ENCODE measurements at regions of chr19 and their contacts with region 1.

Region 1: DNA sequence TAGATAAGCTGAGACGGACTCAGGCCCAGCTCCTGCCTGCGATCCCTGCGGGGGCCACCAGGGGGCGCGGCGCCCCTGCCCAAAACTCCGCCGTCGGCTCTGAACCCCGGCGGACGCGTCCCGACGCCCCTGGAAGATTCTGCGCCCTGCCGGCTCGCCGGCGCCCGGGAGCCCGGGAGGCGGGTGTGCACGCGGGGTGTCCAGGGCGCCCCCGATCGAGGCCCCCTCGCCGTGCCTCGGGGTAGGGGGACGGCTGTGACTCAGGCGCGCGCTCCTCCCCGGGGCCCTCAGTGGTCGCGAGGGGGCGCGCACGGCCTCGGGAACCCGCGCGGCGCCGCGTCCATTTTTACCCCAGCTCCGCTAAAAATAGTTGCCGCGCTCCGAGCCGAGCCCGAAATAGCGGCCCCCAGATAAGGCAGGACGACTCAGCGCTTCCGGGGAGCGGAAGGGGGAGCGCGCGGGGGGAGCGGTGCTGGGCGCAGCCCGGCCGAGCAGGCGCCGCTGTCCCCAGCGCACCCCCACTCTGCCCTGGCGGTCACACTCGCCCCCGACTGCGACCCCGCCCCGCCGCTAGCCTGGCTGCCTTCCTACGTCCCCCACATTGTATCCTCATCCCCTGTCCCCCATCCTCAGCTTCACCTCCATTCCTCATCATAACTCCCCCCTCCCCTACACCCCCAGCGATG is 16.0 kb upstream of the ERCC1 start:
- DNase-seq: peak; percentile 66
- ATAC-seq: peak; percentile 25
- H3K4me3 ChIP-seq: peak overlapping the region; percentile 76
- H3K27ac ChIP-seq: peak overlapping the region; percentile 20; the same call in 1 of the 2 replicates
- H3K4me1 ChIP-seq: peaks cover 14% of the 10 kb centered on the region
- H3K27me3 ChIP-seq: no peaks in the 10 kb centered on the region
- CTCF ChIP-seq: peak; percentile 86

Region 2: DNA sequence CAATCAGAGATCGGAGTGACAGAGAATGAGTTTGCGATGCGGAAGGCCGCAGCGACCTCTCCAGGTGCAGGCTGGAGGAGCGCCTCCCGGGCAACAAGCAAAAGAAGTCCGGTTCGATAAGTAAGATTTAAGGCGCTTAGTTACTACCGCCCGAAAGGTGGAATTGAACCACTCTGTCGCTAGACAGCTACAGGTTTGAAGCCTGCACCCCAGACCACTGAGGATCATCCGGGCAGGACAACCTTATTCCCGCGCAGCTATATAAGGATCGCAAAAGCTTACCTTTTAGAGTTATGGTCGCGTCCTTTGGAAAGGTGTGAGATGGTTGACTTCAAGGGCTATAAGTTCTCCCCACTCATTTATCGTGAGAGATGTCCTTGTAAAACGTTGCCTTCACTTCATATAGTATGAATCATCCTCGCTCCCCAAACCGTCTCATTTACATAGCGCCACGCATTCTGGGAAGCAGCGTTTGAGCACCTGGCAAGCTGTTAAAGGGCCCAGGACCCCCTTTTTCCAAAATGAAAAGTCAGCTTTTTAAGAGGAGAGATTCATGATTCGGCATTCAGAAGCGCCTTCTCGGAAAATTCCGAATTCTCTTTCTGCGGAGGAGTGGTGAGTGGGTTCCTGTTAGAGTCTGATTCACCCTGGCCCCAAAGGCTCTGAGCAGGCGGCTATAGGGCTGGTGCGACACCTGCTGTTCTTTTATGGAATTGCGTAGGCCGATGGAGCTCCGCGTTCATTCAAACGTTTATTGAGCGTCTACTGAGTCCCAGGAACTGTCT is 38.9 kb after region 1 on chr19:
- CTCF ChIA-PET with region 1: interaction called, 60 read pairs
- POLR2A ChIA-PET with region 1: no interaction called
- intact Hi-C with region 1: loop called (anchors 1 kb)
- DNase-seq: peak; percentile 90
- ATAC-seq: peak; percentile 88
- H3K4me3 ChIP-seq: peak overlapping the region; percentile 68
- H3K27ac ChIP-seq: peak overlapping the region; percentile 93
- H3K4me1 ChIP-seq: no peaks in the 10 kb centered on the region
- H3K27me3 ChIP-seq: no peaks in the 10 kb centered on the region
- CTCF ChIP-seq: peak; percentile 84

Region 3: GRCh38 chr19:45485305-45486077 is 45.8 kb after region 1 on chr19:
- CTCF ChIA-PET with region 1: interaction called, 60 read pairs
- POLR2A ChIA-PET with region 1: no interaction called
- intact Hi-C with region 1: no loop called
- DNase-seq: peak; percentile 93
- ATAC-seq: peak; percentile 98
- H3K4me3 ChIP-seq: peak overlapping the region; percentile 73
- H3K27ac ChIP-seq: no peak overlapping the region
- H3K4me1 ChIP-seq: peaks cover 4% of the 10 kb centered on the region; the same call in 1 of the 2 replicates
- H3K27me3 ChIP-seq: no peaks in the 10 kb centered on the region
- CTCF ChIP-seq: peak; percentile 52

Region 4: GRCh38 chr19:45515807-45516401 is 76.2 kb after region 1 on chr19:
- CTCF ChIA-PET with region 1: interaction called, 10 read pairs
- POLR2A ChIA-PET with region 1: no interaction called
- intact Hi-C with region 1: no loop called
- DNase-seq: no peak
- ATAC-seq: no peak
- H3K4me3 ChIP-seq: no peak overlapping the region
- H3K27ac ChIP-seq: no peak overlapping the region
- H3K4me1 ChIP-seq: peaks cover 19% of the 10 kb centered on the region
- H3K27me3 ChIP-seq: no peaks in the 10 kb centered on the region
- CTCF ChIP-seq: no peak

Region 5: GRCh38 chr19:45632468-45633196 is 192.9 kb after region 1 on chr19:
- CTCF ChIA-PET with region 1: no interaction called
- POLR2A ChIA-PET with region 1: no interaction called
- intact Hi-C with region 1: no loop called
- DNase-seq: peak; percentile 82
- ATAC-seq: peak; percentile 77
- H3K4me3 ChIP-seq: no peak overlapping the region
- H3K27ac ChIP-seq: peak overlapping the region; percentile 67
- H3K4me1 ChIP-seq: peaks cover 14% of the 10 kb centered on the region
- H3K27me3 ChIP-seq: no peaks in the 10 kb centered on the region
- CTCF ChIP-seq: no peak